Stomach (tissue), 19 donors: ENCODE measurements at regions of chr2 and their contacts with region 1.

Region 1: DNA sequence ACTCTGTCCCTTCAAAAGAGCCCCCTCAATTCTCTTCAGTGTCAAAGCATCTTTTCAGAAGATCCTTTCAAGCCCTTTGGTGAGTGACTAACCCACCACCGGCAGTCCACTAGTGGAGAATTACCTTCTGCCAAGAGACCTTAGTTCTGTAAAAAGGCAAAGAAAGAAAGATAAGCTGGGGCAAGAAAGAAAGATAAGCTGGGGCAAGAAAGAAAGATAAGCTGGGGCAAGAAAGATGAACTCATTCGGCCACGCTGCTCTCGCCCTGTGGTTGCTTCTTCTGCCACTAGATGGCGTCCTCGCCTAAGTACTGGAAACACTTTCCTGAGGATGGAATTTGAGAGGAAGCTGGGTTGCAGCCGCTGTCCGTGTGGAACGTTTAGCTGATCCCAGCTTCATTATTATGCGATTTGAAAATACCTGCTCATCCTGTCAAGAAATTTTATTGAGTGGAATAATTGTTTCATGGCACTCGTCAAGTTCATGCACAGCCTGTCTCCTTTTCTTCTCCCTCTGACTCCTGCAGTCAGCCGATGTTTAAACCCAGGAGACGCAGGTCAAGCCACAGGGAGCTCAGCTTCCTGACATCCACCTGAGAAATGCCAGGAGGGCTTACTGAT is 17.3 kb upstream of the ANXA4 start:
- DNase-seq: peak; percentile 93 to 94
- H3K4me3 ChIP-seq: peak overlapping the region; percentile 7 to 33 (median 20)
- H3K27ac ChIP-seq: no peak overlapping the region
- H3K4me1 ChIP-seq: peaks cover 0 to 12% (median 5%) of the 10 kb centered on the region in 4 donors
- H3K27me3 ChIP-seq: no peaks in the 10 kb centered on the region
- CTCF ChIP-seq: peak in 6 of 7 experiments; percentile 20 to 98 (median 94)
- EP300 ChIP-seq: no peak
- POLR2A ChIP-seq: no peak

Region 2: GRCh38 chr2:69816923-69817542 is 92.4 kb after region 1 on chr2:
- intact Hi-C with region 1: loop called (anchors 5 kb)
- DNase-seq: peak; percentile 81 to 92
- H3K4me3 ChIP-seq: no peak overlapping the region
- H3K27ac ChIP-seq: no peak overlapping the region
- H3K4me1 ChIP-seq: peaks cover 0 to 13% (median 5%) of the 10 kb centered on the region in 4 donors
- H3K27me3 ChIP-seq: no peaks in the 10 kb centered on the region
- CTCF ChIP-seq: peak in 5 of 7 experiments; percentile 92 to 99 (median 96)
- EP300 ChIP-seq: no peak
- POLR2A ChIP-seq: no peak